CD4-positive, alpha-beta T cell (primary cell): ENCODE measurements at regions of chr3 and their contacts with region 1.

Region 1: DNA sequence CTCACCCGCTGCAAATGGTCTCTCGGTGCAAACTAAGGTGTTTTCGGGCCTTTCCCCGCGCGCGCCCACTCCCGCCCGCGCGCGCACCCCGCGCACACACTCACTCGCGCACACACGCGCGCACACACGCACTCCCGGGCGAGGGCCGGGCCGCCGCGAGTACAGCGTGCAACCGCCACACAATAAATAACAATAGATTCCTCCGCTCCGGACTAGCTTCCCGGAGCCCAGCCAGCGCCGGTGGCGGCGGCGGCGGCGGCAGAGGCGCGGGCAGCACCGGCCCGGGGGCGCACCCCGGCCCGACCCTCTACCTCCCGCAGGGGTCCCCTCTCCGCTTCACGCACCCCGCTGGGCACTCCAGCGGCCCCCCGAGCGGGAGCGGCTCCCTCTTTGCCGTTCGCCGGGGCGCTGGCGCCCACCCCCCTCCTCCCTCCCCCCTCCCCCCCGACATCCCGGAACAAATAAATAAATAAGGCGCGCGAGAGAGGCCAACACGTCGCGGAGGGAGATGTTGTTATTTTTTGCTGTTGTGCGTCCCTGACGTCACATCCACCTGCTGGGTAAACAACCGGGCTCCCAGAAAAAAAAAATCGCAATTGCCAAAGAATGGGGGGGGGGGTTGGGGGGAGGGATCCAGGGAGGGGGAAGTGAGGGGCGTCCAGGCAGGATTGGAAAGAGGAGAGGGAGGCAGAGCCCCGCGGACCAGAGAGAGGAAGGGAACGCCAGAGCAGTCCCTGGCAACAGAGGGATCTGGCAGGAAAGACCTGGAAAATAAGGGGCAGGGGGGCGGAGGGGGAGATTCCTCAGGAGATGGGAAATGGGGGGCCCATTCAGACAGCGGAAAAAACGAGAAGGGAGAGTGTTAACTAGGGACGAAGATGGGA is at the start of gene FOXP1:
- DNase-seq: peak; percentile 49 to 92 (median 68)
- ATAC-seq: peak; percentile 54
- H3K4me3 ChIP-seq: peak within 1 kb of the TSS; percentile 81
- H3K4me3 Mint-ChIP-seq: peak within 1 kb of the TSS; percentile 95
- H3K27ac ChIP-seq: peak within 1 kb of the TSS; percentile 78 to 80
- H3K27ac Mint-ChIP-seq: peak within 1 kb of the TSS; percentile 85
- H3K4me1 ChIP-seq: peaks cover 25% of the 10 kb centered on the region
- H3K4me1 Mint-ChIP-seq: peaks cover 48% of the 10 kb centered on the region
- H3K27me3 ChIP-seq: no peaks in the 10 kb centered on the region
- H3K27me3 Mint-ChIP-seq: no peaks in the 10 kb centered on the region
- CTCF ChIP-seq: no peak
- total RNA-seq, gene FOXP1: 493 to 508 TPM

Region 2: DNA sequence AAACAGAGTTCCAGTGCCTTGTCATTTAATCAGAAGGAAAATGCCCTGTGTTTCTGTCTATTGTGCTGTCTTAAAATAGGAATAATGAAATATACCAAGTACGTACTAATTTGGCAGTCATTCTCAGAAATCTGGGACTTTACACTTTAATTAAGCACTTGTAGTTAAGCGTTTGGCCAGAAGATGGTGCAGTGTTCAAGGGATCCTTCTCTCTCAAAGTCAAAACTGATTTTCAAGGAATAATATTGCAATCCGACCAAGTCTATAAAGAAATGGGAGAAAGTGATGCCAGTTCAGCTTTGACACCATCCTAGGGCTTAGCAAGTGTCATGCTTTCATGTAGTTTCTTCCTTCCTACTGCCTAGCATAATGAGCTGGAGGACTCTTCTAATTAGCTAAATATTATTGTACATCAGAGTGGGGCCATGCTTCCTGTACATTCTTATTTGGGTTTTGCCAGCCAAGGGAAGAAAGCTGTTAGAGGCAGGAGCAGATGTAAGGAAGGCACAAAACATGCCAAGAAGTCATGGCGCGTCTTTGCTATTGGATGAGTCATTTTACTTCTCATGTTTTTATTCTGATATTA is 1519.5 kb before region 1 on chr3:
- CTCF ChIA-PET with region 1: no interaction called
- POLR2A ChIA-PET with region 1: no interaction called
- intact Hi-C with region 1: loop called in 1 of 2 experiments (anchors 5 kb)
- DNase-seq: peak in 4 of 14 experiments; percentile 3 to 34 (median 15)
- ATAC-seq: no peak
- H3K4me3 ChIP-seq: no peak overlapping the region
- H3K4me3 Mint-ChIP-seq: no peak overlapping the region
- H3K27ac ChIP-seq: no peak overlapping the region
- H3K27ac Mint-ChIP-seq: no peak overlapping the region
- H3K4me1 ChIP-seq: no peaks in the 10 kb centered on the region
- H3K4me1 Mint-ChIP-seq: no peaks in the 10 kb centered on the region
- H3K27me3 ChIP-seq: no peaks in the 10 kb centered on the region
- H3K27me3 Mint-ChIP-seq: peaks cover 3% of the 10 kb centered on the region
- CTCF ChIP-seq: peak; percentile 54

Region 3: GRCh38 chr3:70973558-70973957 is 610.2 kb before region 1 on chr3:
- CTCF ChIA-PET with region 1: no interaction called
- POLR2A ChIA-PET with region 1: no interaction called
- intact Hi-C with region 1: loop called in 1 of 2 experiments (anchors 10 kb)
- DNase-seq: no peak
- ATAC-seq: no peak
- H3K4me3 ChIP-seq: no peak overlapping the region
- H3K4me3 Mint-ChIP-seq: no peak overlapping the region
- H3K27ac ChIP-seq: no peak overlapping the region
- H3K27ac Mint-ChIP-seq: peak overlapping the region; percentile 51
- H3K4me1 ChIP-seq: no peaks in the 10 kb centered on the region
- H3K4me1 Mint-ChIP-seq: peaks cover 12% of the 10 kb centered on the region
- H3K27me3 ChIP-seq: no peaks in the 10 kb centered on the region
- H3K27me3 Mint-ChIP-seq: no peaks in the 10 kb centered on the region
- CTCF ChIP-seq: no peak

Region 4: DNA sequence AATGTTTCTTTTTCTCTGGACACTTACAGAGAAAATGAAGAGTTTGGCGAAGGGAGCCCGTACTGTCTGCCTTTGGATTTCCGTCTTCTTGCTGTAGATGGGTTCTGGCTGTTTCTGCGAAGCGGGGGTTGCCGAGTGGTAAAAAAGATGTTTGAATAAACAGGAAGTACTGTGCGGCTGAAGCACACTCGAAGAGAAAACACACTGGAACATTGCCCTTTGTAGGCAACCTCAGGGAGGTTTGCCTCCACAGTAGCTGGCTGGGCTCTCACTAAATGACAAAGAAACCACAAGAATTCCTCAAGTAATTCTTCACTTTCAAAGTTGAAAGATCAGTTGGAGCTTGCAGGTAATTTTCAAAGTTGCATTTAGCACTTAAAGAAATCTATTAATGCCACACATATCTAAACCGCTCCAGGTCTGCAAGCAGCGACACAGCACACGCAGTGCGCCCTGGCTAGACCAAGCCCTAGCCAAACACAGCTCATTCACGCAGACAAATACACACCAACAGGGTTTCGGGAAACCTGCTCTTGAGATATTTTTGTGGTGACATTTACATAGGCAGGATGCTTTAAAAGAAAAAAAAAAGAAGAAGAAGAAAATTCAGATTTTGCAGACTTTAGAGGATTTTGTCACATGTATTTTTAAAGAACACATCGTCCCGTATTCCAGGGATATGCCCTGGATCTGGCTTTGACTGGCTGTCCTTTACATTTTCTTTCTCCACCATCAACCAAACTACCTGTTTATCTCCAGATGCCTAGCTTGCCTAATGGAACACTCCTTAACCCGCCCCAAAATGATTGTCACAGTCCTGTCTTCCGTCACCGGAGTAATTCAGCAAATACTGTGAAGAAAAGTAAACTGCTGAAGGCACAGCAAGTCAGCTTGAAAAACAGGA is 453.1 kb before region 1 on chr3:
- CTCF ChIA-PET with region 1: interaction called, 3 read pairs
- POLR2A ChIA-PET with region 1: interaction called, 5 read pairs
- intact Hi-C with region 1: loop called (anchors 5 kb)
- DNase-seq: peak; percentile 56 to 89 (median 73)
- ATAC-seq: peak; percentile 76
- H3K4me3 ChIP-seq: peak overlapping the region; percentile 70
- H3K4me3 Mint-ChIP-seq: peak overlapping the region; percentile 91
- H3K27ac ChIP-seq: peak overlapping the region; percentile 79 to 93
- H3K27ac Mint-ChIP-seq: peak overlapping the region; percentile 98
- H3K4me1 ChIP-seq: peaks cover 53% of the 10 kb centered on the region
- H3K4me1 Mint-ChIP-seq: peaks cover 88% of the 10 kb centered on the region
- H3K27me3 ChIP-seq: no peaks in the 10 kb centered on the region
- H3K27me3 Mint-ChIP-seq: no peaks in the 10 kb centered on the region
- CTCF ChIP-seq: no peak

Region 5: DNA sequence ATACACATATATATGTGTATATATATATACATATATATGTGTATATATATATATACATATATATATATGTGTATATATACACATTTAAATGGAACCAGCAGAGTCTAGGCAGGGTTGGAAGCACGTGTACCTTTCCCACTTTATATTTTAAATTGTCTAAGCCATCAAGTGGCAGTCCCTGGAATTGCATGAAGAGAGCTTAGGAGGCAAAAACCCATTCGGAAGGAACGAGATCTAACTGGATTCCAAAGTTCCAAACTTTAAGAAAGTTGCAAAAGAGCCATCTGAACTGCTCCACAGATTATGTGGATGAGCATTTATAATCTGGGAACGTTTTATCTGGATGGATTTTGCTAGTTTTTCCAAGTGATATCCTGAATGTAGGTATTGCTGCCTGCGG is 186.8 kb before region 1 on chr3:
- CTCF ChIA-PET with region 1: no interaction called
- POLR2A ChIA-PET with region 1: interaction called, 11 read pairs
- intact Hi-C with region 1: no loop called
- DNase-seq: peak in 3 of 14 experiments; percentile 36 to 52 (median 47)
- ATAC-seq: no peak
- H3K4me3 ChIP-seq: no peak overlapping the region
- H3K4me3 Mint-ChIP-seq: peak overlapping the region; percentile 40
- H3K27ac ChIP-seq: peak overlapping the region; percentile 21 to 91
- H3K27ac Mint-ChIP-seq: peak overlapping the region; percentile 91
- H3K4me1 ChIP-seq: peaks cover 29% of the 10 kb centered on the region
- H3K4me1 Mint-ChIP-seq: peaks cover 85% of the 10 kb centered on the region
- H3K27me3 ChIP-seq: no peaks in the 10 kb centered on the region
- H3K27me3 Mint-ChIP-seq: no peaks in the 10 kb centered on the region
- CTCF ChIP-seq: peak; percentile 34

Region 6: GRCh38 chr3:71512000-71512399 is 71.8 kb before region 1 on chr3:
- CTCF ChIA-PET with region 1: interaction called, 4 read pairs
- POLR2A ChIA-PET with region 1: interaction called, 3 read pairs
- intact Hi-C with region 1: loop called in 1 of 2 experiments (anchors 5 kb)
- DNase-seq: peak in 9 of 14 experiments; percentile 20 to 85 (median 46)
- ATAC-seq: peak; percentile 99
- H3K4me3 ChIP-seq: no peak overlapping the region
- H3K4me3 Mint-ChIP-seq: no peak overlapping the region
- H3K27ac ChIP-seq: no peak overlapping the region
- H3K27ac Mint-ChIP-seq: no peak overlapping the region
- H3K4me1 ChIP-seq: peaks cover 22% of the 10 kb centered on the region
- H3K4me1 Mint-ChIP-seq: peaks cover 21% of the 10 kb centered on the region
- H3K27me3 ChIP-seq: no peaks in the 10 kb centered on the region
- H3K27me3 Mint-ChIP-seq: no peaks in the 10 kb centered on the region
- CTCF ChIP-seq: peak; percentile 70

Region 7: GRCh38 chr3:71616571-71617101 is 32.8 kb after region 1 on chr3:
- CTCF ChIA-PET with region 1: no interaction called
- POLR2A ChIA-PET with region 1: no interaction called
- intact Hi-C with region 1: no loop called
- DNase-seq: no peak
- ATAC-seq: no peak
- H3K4me3 ChIP-seq: no peak overlapping the region
- H3K4me3 Mint-ChIP-seq: no peak overlapping the region
- H3K27ac ChIP-seq: no peak overlapping the region
- H3K27ac Mint-ChIP-seq: no peak overlapping the region
- H3K4me1 ChIP-seq: no peaks in the 10 kb centered on the region
- H3K4me1 Mint-ChIP-seq: peaks cover 9% of the 10 kb centered on the region
- H3K27me3 ChIP-seq: no peaks in the 10 kb centered on the region
- H3K27me3 Mint-ChIP-seq: no peaks in the 10 kb centered on the region
- CTCF ChIP-seq: no peak